ENCODE measurements at regions of chr3 and their contacts with region 1.

Region 1: DNA sequence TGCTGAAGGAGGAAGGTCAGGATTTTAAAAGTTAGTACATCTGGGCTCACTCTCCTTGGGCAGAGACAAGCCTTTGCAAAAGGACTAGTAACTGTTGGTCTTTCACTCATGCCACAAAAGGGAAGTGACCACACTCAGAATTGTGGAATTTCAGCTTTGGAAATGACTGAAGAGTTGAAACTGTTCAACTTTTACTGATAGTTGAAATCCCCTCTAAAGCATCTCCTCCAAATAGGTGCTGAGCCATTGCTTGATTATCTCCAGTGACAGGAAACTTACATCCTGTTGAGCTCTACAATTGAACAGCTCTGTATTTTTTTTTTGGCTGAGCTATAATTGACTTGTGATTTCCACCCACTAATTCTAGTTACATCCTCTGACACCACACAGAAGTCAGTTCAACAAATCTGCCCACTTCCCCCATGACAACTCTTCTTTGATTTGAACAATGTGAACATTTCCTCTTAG is 254.8 kb upstream of the TPRG1 start:
- DNase-seq: no peak
- H3K4me3 ChIP-seq: no peak overlapping the region
- H3K27ac ChIP-seq: no peak overlapping the region
- H3K4me1 ChIP-seq: no peaks in the 10 kb centered on the region
- H3K27me3 ChIP-seq: no peaks in the 10 kb centered on the region
- CTCF ChIP-seq: no peak

Region 2: GRCh38 chr3:188830893-188831292 is 86.1 kb before region 1 on chr3:
- CTCF ChIA-PET with region 1: no interaction called
- dilution Hi-C with region 1: no loop called
- in situ Hi-C with region 1: no loop called
- intact Hi-C with region 1: no loop called
- DNase-seq: no peak
- H3K4me3 ChIP-seq: no peak overlapping the region
- H3K27ac ChIP-seq: no peak overlapping the region
- H3K4me1 ChIP-seq: peaks cover 14% of the 10 kb centered on the region
- H3K27me3 ChIP-seq: no peaks in the 10 kb centered on the region
- CTCF ChIP-seq: peak; percentile 36 to 43

Region 3: GRCh38 chr3:188900421-188900951 is 16.5 kb before region 1 on chr3:
- CTCF ChIA-PET with region 1: interaction called, 21 read pairs
- dilution Hi-C with region 1: no loop called
- in situ Hi-C with region 1: no loop called
- intact Hi-C with region 1: no loop called
- DNase-seq: peak; percentile 86
- H3K4me3 ChIP-seq: no peak overlapping the region
- H3K27ac ChIP-seq: peak overlapping the region; percentile 92
- H3K4me1 ChIP-seq: peaks cover 31% of the 10 kb centered on the region
- H3K27me3 ChIP-seq: no peaks in the 10 kb centered on the region
- CTCF ChIP-seq: no peak

Measured in mammary epithelial cell (primary cell).